AG04449 (cell line): ENCODE measurements at regions of chr3 and their contacts with region 1.

Region 1: DNA sequence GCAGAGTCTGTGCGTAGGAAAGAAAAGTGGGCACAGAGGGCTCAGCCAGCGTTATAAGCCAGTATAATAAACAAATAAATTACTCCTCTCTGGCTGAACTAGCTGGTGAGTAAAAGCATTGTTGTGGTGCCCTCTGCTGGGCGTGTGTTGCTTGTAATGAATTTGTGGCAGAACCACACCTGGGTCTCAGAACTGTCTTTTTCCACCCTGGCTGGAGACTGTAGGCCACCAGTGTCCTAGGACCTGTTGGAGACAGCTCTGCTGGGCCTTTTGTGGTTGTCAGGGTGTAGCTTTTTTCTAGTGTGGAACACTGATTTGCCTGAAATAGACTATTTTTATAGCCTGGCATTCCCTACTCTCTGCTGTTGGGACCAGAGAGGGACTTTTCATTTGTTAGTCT is 130.5 kb upstream of the EIF1B start:
- DNase-seq: peak; percentile 10
- H3K4me3 ChIP-seq: no peak overlapping the region
- CTCF ChIP-seq: peak; percentile 73

Region 2: GRCh38 chr3:39637807-39638206 is 541.2 kb before region 1 on chr3:
- CTCF ChIA-PET with region 1: interaction called, 10 read pairs
- POLR2A ChIA-PET with region 1: no interaction called
- DNase-seq: no peak
- H3K4me3 ChIP-seq: no peak overlapping the region
- CTCF ChIP-seq: peak; percentile 20

Region 3: GRCh38 chr3:39707314-39707909 is 471.6 kb before region 1 on chr3:
- CTCF ChIA-PET with region 1: interaction called, 31 read pairs
- POLR2A ChIA-PET with region 1: no interaction called
- DNase-seq: peak; percentile 2
- H3K4me3 ChIP-seq: no peak overlapping the region
- CTCF ChIP-seq: peak; percentile 54

Region 4: DNA sequence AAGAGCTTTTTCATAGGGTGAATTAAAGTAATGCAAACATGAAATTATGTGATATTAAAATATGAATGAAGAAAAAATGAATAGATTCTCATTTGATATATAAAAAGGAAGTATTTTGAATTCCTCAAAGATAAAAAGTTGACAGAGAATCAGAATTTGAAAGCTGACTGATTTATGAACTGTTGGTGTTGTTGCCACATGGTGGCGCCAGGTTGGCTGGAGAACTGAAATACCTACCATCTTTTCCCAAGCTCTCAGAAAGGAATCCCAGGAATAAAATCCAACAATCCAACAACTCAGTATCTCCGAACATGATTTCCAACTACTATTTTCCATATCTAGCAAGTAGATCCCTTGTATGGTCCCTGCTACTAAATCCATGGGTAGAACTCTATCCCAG is 366.5 kb before region 1 on chr3:
- CTCF ChIA-PET with region 1: interaction called, 22 read pairs
- POLR2A ChIA-PET with region 1: no interaction called
- DNase-seq: no peak
- H3K4me3 ChIP-seq: no peak overlapping the region
- CTCF ChIP-seq: no peak

Region 5: GRCh38 chr3:40018369-40018768 is 160.6 kb before region 1 on chr3:
- CTCF ChIA-PET with region 1: no interaction called
- POLR2A ChIA-PET with region 1: no interaction called
- DNase-seq: no peak
- H3K4me3 ChIP-seq: no peak overlapping the region
- CTCF ChIP-seq: no peak

Region 6: GRCh38 chr3:40191850-40192448 is 12.9 kb after region 1 on chr3:
- CTCF ChIA-PET with region 1: interaction called, 60 read pairs
- POLR2A ChIA-PET with region 1: no interaction called
- DNase-seq: no peak
- H3K4me3 ChIP-seq: no peak overlapping the region
- CTCF ChIP-seq: peak; percentile 81

Region 7: GRCh38 chr3:40258555-40258954 is 79.5 kb after region 1 on chr3:
- CTCF ChIA-PET with region 1: no interaction called
- POLR2A ChIA-PET with region 1: no interaction called
- DNase-seq: no peak
- H3K4me3 ChIP-seq: no peak overlapping the region
- CTCF ChIP-seq: no peak